Panc1 (cell line): ENCODE measurements at regions of chr17 and their contacts with region 1.

Region 1: DNA sequence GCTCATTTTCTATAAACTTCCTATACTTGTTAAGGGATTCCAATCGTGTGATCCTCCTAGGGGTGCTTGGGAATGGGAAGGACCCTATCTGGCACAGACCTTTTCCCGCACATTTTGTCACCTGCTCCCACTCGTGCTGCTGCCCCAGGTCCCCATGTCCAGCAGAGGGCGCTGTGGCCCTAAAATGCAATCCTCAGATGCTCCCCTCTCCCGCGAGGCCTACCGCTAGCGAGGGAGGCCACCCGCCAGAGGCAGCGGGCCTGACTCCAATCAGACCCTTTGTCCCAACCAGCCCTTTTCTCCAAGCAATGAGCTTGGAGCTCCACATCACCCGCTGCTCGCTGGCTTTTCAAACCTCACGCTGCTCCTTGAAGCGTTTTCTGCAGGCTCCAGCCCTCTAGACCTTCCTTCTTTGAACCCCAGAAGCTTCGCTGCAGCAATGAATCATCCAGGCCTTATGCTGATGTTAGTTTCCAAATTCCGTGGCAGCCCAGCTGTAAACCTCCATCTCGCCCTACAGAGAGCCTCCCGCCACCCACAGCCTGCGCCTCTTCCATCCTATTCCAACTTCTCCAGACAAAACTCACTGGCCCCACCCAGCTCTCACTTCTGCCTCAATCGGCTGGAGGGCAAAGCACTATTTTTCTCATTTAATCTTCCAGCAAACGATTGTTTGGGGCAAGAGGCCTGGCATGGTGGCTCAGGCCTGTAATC is 23.6 kb upstream of the FZD2 start:
- DNase-seq: no peak
- ATAC-seq: peak; percentile 96
- H3K4me3 ChIP-seq: peak overlapping the region in 1 of 2 experiments; percentile 27; a peak in 2 of 4 replicates
- H3K27ac ChIP-seq: peak overlapping the region; percentile 86
- H3K4me1 ChIP-seq: peaks cover 15% of the 10 kb centered on the region
- H3K27me3 ChIP-seq: no peaks in the 10 kb centered on the region
- CTCF ChIP-seq: peak; percentile 88

Region 2: GRCh38 chr17:44438636-44439035 is 95.1 kb before region 1 on chr17:
- CTCF ChIA-PET with region 1: no interaction called
- POLR2A ChIA-PET with region 1: no interaction called
- in situ Hi-C with region 1: no loop called
- intact Hi-C with region 1: no loop called
- DNase-seq: no peak
- ATAC-seq: no peak
- H3K4me3 ChIP-seq: no peak overlapping the region
- H3K27ac ChIP-seq: no peak overlapping the region
- H3K4me1 ChIP-seq: no peaks in the 10 kb centered on the region; the same call in 1 of the 2 replicates
- H3K27me3 ChIP-seq: no peaks in the 10 kb centered on the region
- CTCF ChIP-seq: no peak

Region 3: GRCh38 chr17:44464037-44464436 is 69.7 kb before region 1 on chr17:
- CTCF ChIA-PET with region 1: no interaction called
- POLR2A ChIA-PET with region 1: no interaction called
- in situ Hi-C with region 1: no loop called
- intact Hi-C with region 1: no loop called
- DNase-seq: no peak
- ATAC-seq: no peak
- H3K4me3 ChIP-seq: no peak overlapping the region
- H3K27ac ChIP-seq: no peak overlapping the region
- H3K4me1 ChIP-seq: peaks cover 12% of the 10 kb centered on the region; the same call in 1 of the 2 replicates
- H3K27me3 ChIP-seq: no peaks in the 10 kb centered on the region
- CTCF ChIP-seq: no peak

Region 4: GRCh38 chr17:44614862-44615261 is 81.2 kb after region 1 on chr17:
- CTCF ChIA-PET with region 1: no interaction called
- POLR2A ChIA-PET with region 1: interaction called, 12 read pairs
- in situ Hi-C with region 1: no loop called
- intact Hi-C with region 1: no loop called
- DNase-seq: no peak
- ATAC-seq: no peak
- H3K4me3 ChIP-seq: no peak overlapping the region
- H3K27ac ChIP-seq: no peak overlapping the region
- H3K4me1 ChIP-seq: no peaks in the 10 kb centered on the region
- H3K27me3 ChIP-seq: no peaks in the 10 kb centered on the region
- CTCF ChIP-seq: no peak

Region 5: GRCh38 chr17:44637066-44637465 is 103.4 kb after region 1 on chr17:
- CTCF ChIA-PET with region 1: interaction called, 14 read pairs
- POLR2A ChIA-PET with region 1: no interaction called
- in situ Hi-C with region 1: no loop called
- intact Hi-C with region 1: loop called (anchors 2 kb)
- DNase-seq: no peak
- ATAC-seq: no peak
- H3K4me3 ChIP-seq: no peak overlapping the region
- H3K27ac ChIP-seq: no peak overlapping the region
- H3K4me1 ChIP-seq: no peaks in the 10 kb centered on the region
- H3K27me3 ChIP-seq: no peaks in the 10 kb centered on the region
- CTCF ChIP-seq: no peak